ENCODE measurements at regions of chr5 and their contacts with region 1.

Region 1: DNA sequence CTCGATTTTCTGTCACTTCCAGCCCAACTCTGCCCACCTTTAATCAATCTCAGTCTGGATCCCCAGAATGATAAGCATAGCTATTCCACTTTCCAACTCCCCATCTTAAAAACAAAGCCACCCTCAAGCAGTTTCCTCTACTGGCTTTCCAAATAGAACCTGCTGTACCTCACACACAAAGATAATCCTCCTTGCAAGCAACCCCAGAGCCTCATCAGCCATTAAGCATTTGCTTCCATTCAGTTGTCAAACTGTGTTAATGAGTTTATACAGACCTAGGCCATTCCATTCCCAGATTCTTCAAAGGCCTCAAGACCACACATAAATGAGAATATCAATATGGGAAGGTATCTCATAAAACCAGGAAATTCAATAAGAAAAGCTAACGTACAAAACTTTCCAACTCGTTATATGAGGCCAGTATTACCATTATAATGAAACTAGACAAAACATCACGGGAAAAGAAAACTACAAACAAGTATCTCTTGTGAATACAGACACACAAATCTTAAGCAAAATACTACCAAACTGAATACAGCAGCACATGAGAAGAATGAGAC is 86.8 kb downstream of the DROSHA start:
- DNase-seq: no peak
- H3K4me3 ChIP-seq: no peak overlapping the region
- H3K27ac ChIP-seq: no peak overlapping the region
- H3K4me1 ChIP-seq: peaks cover 10% of the 10 kb centered on the region
- H3K27me3 ChIP-seq: no peaks in the 10 kb centered on the region
- CTCF ChIP-seq: no peak

Region 2: GRCh38 chr5:31476738-31477141 is 31.6 kb after region 1 on chr5:
- CTCF ChIA-PET with region 1: no interaction called
- POLR2A ChIA-PET with region 1: no interaction called
- intact Hi-C with region 1: no loop called
- DNase-seq: no peak
- H3K4me3 ChIP-seq: no peak overlapping the region
- H3K27ac ChIP-seq: no peak overlapping the region
- H3K4me1 ChIP-seq: peaks cover 7% of the 10 kb centered on the region
- H3K27me3 ChIP-seq: no peaks in the 10 kb centered on the region
- CTCF ChIP-seq: no peak

Region 3: GRCh38 chr5:31702709-31703108 is 257.6 kb after region 1 on chr5:
- CTCF ChIA-PET with region 1: no interaction called
- POLR2A ChIA-PET with region 1: no interaction called
- intact Hi-C with region 1: no loop called
- DNase-seq: no peak
- H3K4me3 ChIP-seq: no peak overlapping the region
- H3K27ac ChIP-seq: no peak overlapping the region
- H3K4me1 ChIP-seq: no peaks in the 10 kb centered on the region
- H3K27me3 ChIP-seq: no peaks in the 10 kb centered on the region
- CTCF ChIP-seq: no peak

Region 4: DNA sequence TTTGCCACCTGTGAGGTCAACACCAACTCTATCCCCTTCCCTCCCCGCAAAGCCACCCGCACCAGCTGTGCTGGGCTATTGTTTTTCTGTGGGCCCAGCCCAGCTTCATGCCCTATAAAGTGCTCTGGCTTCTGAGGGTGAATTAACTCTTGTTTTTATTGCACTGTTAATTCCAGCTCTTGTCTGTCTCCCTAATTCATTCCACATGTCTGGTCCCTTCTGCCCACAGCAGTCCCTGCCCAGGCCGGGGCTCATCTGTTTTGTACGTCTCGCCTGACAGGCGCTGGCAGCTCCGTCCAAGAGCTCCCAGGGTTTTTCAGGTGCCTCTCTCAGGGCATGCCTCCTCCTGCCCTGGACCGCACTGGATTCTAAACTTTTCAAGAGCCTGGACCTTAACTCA is 312.7 kb after region 1 on chr5:
- CTCF ChIA-PET with region 1: no interaction called
- POLR2A ChIA-PET with region 1: interaction called, 10 read pairs
- intact Hi-C with region 1: no loop called
- DNase-seq: no peak
- H3K4me3 ChIP-seq: no peak overlapping the region
- H3K27ac ChIP-seq: no peak overlapping the region
- H3K4me1 ChIP-seq: no peaks in the 10 kb centered on the region
- H3K27me3 ChIP-seq: no peaks in the 10 kb centered on the region
- CTCF ChIP-seq: no peak